Testis (tissue), 5 donors: ENCODE measurements at regions of chr4 and their contacts with region 1.

Region 1: GRCh38 chr4:125266901-125267604 is 47.7 kb upstream of the FAT4 start:
- DNase-seq: no peak
- H3K4me3 ChIP-seq: no peak overlapping the region
- H3K27ac ChIP-seq: no peak overlapping the region
- H3K4me1 ChIP-seq: no peaks in the 10 kb centered on the region
- H3K27me3 ChIP-seq: no peaks in the 10 kb centered on the region
- CTCF ChIP-seq: no peak
- POLR2A ChIP-seq: no peak

Region 2: GRCh38 chr4:124863107-124863506 is 403.9 kb before region 1 on chr4:
- intact Hi-C with region 1: no loop called
- DNase-seq: no peak
- H3K4me3 ChIP-seq: no peak overlapping the region
- H3K27ac ChIP-seq: no peak overlapping the region
- H3K4me1 ChIP-seq: peaks cover 6% of the 10 kb centered on the region
- H3K27me3 ChIP-seq: no peaks in the 10 kb centered on the region
- CTCF ChIP-seq: no peak
- POLR2A ChIP-seq: no peak

Region 3: DNA sequence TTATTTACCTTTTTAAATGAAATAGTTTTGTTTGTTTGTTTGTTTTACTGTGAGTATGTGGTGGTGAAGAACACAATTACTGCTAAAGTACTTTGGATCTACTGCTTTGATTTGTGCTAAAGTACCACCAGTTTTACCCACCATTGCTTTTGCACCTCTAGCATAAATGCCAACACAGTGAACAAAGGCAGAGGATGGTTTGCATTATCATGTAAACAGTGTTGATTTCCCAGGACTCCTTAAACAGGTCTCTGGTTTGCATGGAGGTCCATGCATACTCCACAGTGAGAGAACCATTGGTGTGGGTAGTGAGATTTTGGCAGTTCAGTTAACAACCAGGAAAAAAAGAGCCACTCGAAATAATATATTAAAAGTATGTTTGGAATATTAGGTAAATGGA is 58.7 kb after region 1 on chr4:
- intact Hi-C with region 1: loop called (anchors 5 kb)
- DNase-seq: no peak
- H3K4me3 ChIP-seq: no peak overlapping the region
- H3K27ac ChIP-seq: no peak overlapping the region
- H3K4me1 ChIP-seq: no peaks in the 10 kb centered on the region
- H3K27me3 ChIP-seq: no peaks in the 10 kb centered on the region
- CTCF ChIP-seq: no peak
- POLR2A ChIP-seq: no peak